Sciatic nerve (tissue), 2 donors: ENCODE measurements at regions of chr2 and their contacts with region 1.

Region 1: DNA sequence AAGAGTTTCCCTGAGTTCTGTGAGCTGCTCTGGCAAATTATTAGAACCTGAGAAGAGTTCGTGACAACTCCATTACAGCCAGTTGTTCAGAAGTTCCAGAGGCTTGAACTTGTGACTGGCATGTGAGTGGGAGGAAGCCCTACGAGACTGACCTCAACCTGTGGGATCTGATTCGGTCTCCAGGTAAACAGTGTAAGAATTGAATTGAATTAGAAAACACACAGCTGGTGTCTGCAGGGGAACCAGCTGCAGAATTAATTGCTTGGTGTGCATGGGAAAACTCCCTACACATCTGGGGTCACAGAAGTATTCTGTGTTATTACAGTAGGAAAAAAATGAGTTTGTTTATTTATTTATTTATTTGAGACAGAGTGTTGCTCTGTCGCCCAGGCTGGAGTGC is 14.0 kb upstream of the ITSN2 start:
- DNase-seq: no peak
- ATAC-seq: no peak

Region 2: DNA sequence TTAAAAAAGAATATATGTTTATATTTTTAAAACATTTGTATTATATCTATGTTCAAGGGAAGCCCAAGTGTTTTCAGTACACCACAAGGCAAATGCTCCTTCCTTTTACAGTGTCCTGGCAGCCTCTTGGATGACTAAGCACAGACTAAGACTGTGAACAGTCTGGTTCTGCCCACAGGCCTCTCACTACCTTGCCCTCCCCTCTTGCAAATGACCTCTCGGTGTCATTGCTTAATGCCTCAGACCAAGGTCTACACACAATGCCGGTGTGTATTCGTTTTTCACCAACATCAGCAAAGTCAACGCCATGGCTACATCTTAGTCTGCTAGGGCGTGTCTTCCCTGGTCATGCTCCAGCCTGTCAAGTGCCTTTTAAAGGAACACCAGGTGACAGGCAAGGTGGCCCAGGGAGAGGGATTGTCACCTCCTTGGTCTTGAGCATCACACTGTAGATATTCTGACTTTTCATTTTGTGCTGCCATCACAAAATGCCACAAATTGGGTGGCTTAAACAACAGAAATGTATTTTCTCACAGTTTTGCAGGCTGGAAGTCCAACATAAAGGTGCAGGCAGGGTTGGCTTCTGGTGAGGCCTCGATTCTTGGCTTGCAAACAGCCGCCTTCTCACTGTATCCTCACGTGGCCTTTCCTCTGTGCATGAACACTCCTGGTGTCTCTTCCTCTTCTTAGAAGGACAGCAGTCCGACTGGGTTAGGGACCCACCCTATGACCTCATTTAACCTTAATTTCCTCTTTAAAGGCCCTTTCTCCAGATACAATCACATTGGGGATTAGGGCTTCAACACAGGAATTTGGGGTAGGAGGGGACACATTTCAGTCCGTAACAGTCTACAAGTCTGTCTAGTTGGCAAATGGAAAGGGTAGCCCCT is 722.9 kb before region 1 on chr2:
- intact Hi-C with region 1: no loop called
- DNase-seq: no peak
- ATAC-seq: no peak

Region 3: GRCh38 chr2:23916727-23917405 is 457.4 kb before region 1 on chr2:
- intact Hi-C with region 1: loop called (anchors 5 kb)
- DNase-seq: no peak
- ATAC-seq: no peak

Region 4: GRCh38 chr2:24191848-24192247 is 182.5 kb before region 1 on chr2:
- intact Hi-C with region 1: no loop called
- DNase-seq: no peak
- ATAC-seq: no peak

Region 5: GRCh38 chr2:24749069-24749691 is 374.9 kb after region 1 on chr2:
- intact Hi-C with region 1: no loop called
- DNase-seq: no peak
- ATAC-seq: no peak